ENCODE measurements at regions of chr19 and their contacts with region 1.

Region 1: GRCh38 chr19:35757749-35758608 is at the start of gene PROSER3:
- DNase-seq: peak; percentile 96 to 99 (median 99)
- H3K4me3 ChIP-seq: peak within 1 kb of the TSS; percentile 72 to 100 (median 93)
- H3K27ac ChIP-seq: peak within 1 kb of the TSS; percentile 57 to 97 (median 90)
- H3K27me3 ChIP-seq: no peaks in the 10 kb centered on the region
- CTCF ChIP-seq: peak in 5 of 56 donors; percentile 2 to 27 (median 6)
- total RNA-seq, gene PROSER3: 13.9 to 41.1 (median 25.9) TPM

Region 2: DNA sequence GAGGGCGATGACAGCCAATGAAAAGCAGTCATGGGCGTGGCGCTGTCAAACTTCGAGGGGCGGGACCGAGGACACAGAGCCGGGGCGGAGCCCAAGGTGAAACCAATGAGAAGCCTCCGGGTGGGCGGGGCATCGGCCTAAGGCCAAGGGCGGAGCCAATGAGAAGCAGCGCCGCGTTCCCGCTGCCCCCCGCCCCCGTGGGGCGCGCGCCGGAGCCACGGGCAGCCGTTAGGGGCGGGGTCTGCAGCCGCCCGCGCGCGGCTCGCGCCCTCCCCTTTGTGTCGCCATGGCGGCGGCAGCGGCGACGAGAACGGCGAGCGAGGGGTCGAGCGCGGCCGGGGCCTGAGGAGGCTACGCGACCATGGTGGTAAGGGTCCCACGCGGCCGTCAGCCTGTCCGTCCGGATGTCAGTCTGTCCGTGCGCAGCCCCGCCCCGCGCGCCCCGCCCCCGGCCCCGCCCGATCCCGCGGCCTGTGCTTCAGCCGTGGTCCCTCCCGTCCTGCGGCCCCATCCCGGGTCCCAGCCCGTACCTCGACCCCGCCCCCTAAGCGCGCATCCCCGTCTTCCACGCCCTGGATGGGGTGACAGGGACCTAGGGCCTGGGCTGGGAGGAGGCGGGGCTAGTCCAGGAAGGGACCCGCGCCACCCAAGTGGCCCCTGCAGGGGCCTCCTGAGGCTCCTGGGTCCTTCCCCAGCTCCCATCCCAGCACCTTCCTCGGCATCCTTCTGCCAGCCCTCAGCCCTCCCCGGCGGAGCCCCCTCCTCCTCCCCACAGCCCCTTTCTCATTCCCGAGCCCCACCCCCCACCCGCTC is 17.5 kb after region 1 on chr19 and contains the start of gene ARHGAP33:
- intact Hi-C with region 1: loop called in 1 of 2 experiments (anchors 2 kb)
- DNase-seq: peak; percentile 99 to 100 (median 100)
- H3K4me3 ChIP-seq: peak within 1 kb of the TSS; percentile 62 to 98 (median 90)
- H3K27ac ChIP-seq: peak within 1 kb of the TSS in 53 of 59 donors; percentile 20 to 90 (median 82)
- H3K27me3 ChIP-seq: no peaks in the 10 kb centered on the region
- CTCF ChIP-seq: peak in 23 of 56 donors; percentile 7 to 50 (median 17)
- total RNA-seq, gene ARHGAP33: 53.2 to 121 (median 87.3) TPM

Region 3: DNA sequence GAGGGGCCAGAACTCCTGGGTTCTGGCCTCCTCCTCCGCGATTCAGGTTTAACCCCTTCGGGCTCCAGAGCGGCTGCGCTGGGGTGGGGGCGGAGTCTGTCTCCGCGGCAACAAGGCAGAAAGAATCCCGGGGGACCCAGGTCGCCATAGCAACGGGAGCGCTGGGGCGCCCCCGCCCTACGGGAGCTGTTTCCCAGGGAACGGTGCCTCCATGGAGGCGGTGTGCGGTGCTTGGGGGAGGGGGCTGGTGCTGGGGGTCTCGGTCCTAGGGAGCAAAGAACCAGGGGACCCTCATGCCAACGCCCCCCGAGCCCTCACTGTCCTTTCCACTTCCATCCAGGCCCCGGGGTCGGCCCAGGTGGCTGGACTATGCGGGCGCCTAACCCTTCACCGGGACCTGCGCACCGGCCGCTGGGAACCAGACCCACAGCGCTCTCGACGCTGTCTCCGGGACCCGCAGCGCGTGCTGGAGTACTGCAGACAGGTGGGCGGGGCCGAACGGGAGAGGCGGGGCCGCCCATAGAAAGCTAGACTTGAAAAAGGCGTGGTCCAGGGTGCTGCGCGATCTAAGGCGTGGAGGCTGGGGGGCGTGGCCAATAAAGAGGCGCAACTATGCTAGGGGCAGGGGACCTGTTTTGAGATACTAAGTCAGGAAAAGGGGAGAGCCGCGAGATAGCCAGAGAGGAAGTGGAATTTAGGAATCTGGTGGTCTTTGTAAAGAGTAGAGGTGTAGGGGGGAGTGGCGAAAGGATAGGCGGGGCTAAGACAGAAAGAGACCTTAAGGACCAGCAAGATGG is 111.5 kb after region 1 on chr19:
- intact Hi-C with region 1: loop called in 1 of 2 experiments (anchors 10 kb)
- DNase-seq: peak; percentile 70 to 92 (median 88)
- H3K4me3 ChIP-seq: peak overlapping the region; percentile 56 to 92 (median 84)
- H3K27ac ChIP-seq: peak overlapping the region; percentile 90 to 100 (median 99)
- H3K27me3 ChIP-seq: no peaks in the 10 kb centered on the region
- CTCF ChIP-seq: peak in 2 of 56 donors; percentile 10 to 30

Region 4: GRCh38 chr19:35879770-35880317 is 121.9 kb after region 1 on chr19:
- intact Hi-C with region 1: loop called (anchors 5 to 10 kb)
- DNase-seq: peak; percentile 76 to 89 (median 84)
- H3K4me3 ChIP-seq: peak overlapping the region in 28 of 59 donors; percentile 0 to 46 (median 20)
- H3K27ac ChIP-seq: peak overlapping the region in 28 of 59 donors; percentile 1 to 65 (median 38)
- H3K27me3 ChIP-seq: no peaks in the 10 kb centered on the region
- CTCF ChIP-seq: peak in 13 of 56 donors; percentile 11 to 47 (median 23)

Region 5: DNA sequence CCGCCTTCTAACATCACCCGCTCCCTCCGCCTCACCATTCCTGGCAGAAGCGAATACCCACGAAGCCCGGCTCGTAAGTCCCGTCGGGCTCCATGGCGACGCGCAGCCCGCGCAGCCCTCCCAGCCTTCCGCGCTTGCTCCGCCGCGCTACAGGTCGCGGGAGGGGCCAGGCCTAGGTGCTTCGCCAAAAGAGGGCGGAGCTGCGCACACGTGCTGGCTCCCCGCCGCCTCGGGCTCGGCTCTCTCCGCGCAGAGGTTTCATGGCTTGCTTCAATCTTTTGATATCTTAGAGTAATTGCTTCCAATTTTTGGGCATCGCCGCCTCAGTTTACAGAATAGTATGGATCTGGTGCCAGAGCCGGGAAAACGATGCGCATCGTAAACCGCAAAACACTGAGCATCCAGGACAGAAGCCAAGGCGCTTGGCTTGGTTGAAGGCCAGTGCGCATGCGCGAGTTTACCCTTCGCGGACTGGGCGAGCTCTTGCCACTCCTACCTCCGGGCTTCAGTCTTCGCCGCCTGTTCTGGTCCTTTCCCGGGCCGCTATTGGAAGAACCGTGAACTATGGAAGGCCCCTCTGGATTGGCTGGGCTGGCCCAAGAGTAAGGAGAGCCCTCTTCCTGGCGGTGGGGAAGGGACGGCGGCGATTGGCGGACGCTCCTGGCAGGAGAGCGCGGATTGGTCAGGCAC is 356.9 kb after region 1 on chr19 and contains the start of gene POLR2I:
- intact Hi-C with region 1: loop called in 1 of 2 experiments (anchors 5 kb)
- DNase-seq: peak; percentile 97 to 100 (median 100)
- H3K4me3 ChIP-seq: peak within 1 kb of the TSS; percentile 61 to 98 (median 92)
- H3K27ac ChIP-seq: peak within 1 kb of the TSS; percentile 75 to 99 (median 95)
- H3K27me3 ChIP-seq: no peaks in the 10 kb centered on the region
- CTCF ChIP-seq: peak in 20 of 56 donors; percentile 1 to 60 (median 20)
- total RNA-seq, gene POLR2I: 61.9 to 165 (median 106) TPM

Measured in dorsolateral prefrontal cortex (tissue), 120 donors.